Activated CD4-positive, alpha-beta memory T cell treated with anti-CD3 and anti-CD28 coated beads, Interleukin-2, amount 10 ng/mL, durations not matched to agents 7 days and 5 days (primary cell): ENCODE measurements at regions of chr4 and their contacts with region 1.

Region 1: DNA sequence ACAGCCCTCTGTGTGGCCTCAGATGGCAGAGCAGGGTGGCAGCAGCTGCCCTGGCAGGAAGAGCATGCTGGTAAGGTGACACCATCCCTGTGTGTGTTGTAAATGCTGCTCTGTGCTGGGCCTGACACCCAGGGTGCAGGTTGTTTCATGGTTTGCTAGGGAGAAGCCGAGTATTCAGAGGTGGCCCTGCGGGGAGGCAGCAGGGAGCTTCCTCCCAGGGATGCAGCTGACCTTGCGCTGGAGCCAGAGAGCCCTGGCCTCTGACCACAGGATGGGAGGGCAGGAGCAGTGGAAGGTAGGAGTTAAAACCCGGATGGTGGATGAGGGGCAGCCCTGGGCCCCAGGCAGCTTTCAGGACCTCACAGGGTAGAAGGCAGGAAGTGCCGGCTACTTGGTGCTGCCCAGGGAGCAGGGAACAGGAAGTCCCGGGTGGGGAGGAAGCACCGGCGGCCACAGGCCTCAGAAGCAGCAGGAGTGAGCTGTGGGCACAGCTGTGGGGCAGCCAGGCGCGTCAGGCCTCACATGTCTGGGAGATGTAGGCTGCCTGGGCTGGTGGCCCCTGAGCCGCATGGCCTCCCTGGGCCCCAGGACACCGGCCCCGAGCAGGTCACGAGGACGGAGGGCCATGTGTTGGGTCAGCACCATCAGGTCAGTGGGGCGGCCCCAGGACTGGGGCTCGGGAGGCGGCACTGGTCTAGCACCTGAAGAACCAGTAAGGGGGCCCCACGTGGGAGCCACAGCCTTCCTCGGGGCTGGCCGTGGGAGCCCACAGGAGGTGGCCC is 19.1 kb downstream of the SH3BP2 start:
- DNase-seq: peak; percentile 81
- H3K4me3 Mint-ChIP-seq: peak overlapping the region; percentile 82
- H3K27ac Mint-ChIP-seq: peak overlapping the region; percentile 99
- H3K4me1 Mint-ChIP-seq: peaks cover 62% of the 10 kb centered on the region
- H3K27me3 Mint-ChIP-seq: no peaks in the 10 kb centered on the region

Region 2: DNA sequence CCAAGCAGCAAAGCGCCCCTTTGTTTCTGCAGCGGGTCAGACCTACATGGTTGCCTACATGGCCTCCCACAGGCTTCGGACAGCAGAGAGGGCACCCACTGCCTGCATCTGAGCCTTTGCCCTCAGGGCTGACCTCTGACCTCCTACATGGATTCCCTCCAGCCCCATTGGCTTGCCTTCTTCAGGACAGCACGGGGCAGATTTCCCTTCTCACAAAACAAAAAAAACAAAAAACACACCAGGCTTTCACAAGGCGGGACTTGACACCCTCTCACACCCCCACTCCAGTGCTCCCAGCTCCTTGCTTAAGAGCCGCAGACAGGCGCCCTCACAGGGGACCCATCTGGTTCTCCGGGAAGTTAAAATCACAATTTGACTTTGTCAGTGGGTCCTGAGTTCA is 426.5 kb before region 1 on chr4:
- CTCF ChIA-PET with region 1: no interaction called
- POLR2A ChIA-PET with region 1: no interaction called
- DNase-seq: no peak
- H3K4me3 Mint-ChIP-seq: no peak overlapping the region
- H3K27ac Mint-ChIP-seq: no peak overlapping the region
- H3K4me1 Mint-ChIP-seq: peaks cover 11% of the 10 kb centered on the region
- H3K27me3 Mint-ChIP-seq: no peaks in the 10 kb centered on the region

Region 3: DNA sequence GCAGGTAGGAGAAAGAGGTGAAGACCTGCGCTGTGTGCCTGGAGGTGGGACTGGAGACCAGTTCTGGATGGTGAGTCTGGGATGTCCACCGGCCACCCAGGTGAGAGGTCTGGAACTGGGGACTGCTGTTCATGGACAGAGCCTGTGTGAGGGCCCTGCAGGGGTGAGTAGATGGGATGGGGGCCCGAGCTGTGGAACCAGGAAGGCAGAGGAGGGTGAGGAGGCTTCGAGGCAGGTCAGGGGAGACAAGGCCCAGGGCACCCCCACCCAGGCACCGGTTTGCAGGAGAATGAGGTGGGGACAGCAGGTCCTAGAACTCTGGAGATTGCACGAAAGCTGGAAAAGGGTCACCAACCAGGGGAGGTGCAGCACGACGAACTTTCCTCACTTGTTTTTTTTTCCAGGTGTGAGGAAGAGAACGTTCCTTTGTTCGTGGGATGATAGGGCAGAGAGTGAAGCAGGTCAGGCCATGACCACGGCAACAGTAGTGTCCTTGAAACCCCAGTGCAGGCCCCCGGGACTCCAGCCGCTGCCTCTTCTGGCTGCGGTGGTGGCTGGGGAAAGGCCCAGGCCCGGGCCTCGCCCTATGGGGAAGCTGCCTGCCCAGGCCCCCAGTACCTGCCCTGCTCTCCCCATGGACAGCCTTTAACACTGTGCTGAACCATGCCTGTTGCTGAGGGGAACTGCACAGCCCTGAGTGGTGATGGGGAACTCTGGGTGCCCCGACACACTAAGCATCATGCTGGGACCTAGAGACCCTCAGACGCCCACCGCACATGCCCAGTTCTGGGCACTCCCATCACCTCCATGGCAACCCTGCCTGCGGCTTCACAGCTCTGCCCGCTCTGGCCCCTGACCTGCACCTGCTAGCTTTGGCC is 78.8 kb before region 1 on chr4:
- CTCF ChIA-PET with region 1: no interaction called
- POLR2A ChIA-PET with region 1: no interaction called
- DNase-seq: no peak
- H3K4me3 Mint-ChIP-seq: no peak overlapping the region
- H3K27ac Mint-ChIP-seq: peak overlapping the region; percentile 35
- H3K4me1 Mint-ChIP-seq: peaks cover 12% of the 10 kb centered on the region
- H3K27me3 Mint-ChIP-seq: no peaks in the 10 kb centered on the region

Region 4: GRCh38 chr4:2800691-2801596 is 11.1 kb before region 1 on chr4:
- CTCF ChIA-PET with region 1: interaction called, 5 read pairs
- POLR2A ChIA-PET with region 1: interaction called, 86 read pairs
- DNase-seq: no peak
- H3K4me3 Mint-ChIP-seq: peak overlapping the region; percentile 65
- H3K27ac Mint-ChIP-seq: no peak overlapping the region
- H3K4me1 Mint-ChIP-seq: peaks cover 50% of the 10 kb centered on the region
- H3K27me3 Mint-ChIP-seq: no peaks in the 10 kb centered on the region

Region 5: DNA sequence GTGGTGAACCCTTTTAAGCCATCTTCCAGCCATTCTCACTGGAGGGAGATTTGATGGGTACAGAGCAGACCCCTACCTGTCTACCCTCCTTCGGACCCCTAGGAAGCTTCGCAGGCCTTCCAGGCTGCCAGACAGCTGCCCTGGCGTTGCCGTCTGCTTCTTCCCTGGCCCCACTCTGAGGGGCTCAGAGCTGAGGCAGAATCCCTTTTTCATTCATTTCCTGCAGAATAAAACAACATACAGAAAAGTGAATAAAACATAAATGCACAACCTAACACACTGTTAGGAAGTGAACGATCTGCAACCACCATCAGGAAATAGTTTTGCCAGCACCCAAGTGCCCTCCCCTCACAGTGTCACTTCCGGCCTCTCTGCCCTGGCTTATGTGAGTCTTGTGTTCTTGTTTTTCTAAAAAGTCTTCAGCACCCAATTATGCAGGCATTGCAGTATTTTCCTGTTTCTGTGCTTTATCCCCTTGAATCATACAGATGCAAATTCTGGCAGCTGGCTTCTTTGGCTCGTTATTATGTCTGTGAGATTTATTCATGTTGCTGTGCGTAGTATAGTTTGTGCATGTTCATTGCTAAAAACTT is 26.0 kb after region 1 on chr4:
- CTCF ChIA-PET with region 1: no interaction called
- POLR2A ChIA-PET with region 1: interaction called, 23 read pairs
- DNase-seq: peak; percentile 84
- H3K4me3 Mint-ChIP-seq: peak overlapping the region; percentile 75
- H3K27ac Mint-ChIP-seq: peak overlapping the region; percentile 93
- H3K4me1 Mint-ChIP-seq: peaks cover 75% of the 10 kb centered on the region
- H3K27me3 Mint-ChIP-seq: no peaks in the 10 kb centered on the region

Region 6: GRCh38 chr4:2843263-2843940 is 31.4 kb after region 1 on chr4 and contains the start of gene ADD1:
- CTCF ChIA-PET with region 1: no interaction called
- POLR2A ChIA-PET with region 1: interaction called, 23 read pairs
- DNase-seq: peak; percentile 94
- H3K4me3 Mint-ChIP-seq: peak within 1 kb of the TSS; percentile 84
- H3K27ac Mint-ChIP-seq: peak within 1 kb of the TSS; percentile 85
- H3K4me1 Mint-ChIP-seq: peaks cover 59% of the 10 kb centered on the region
- H3K27me3 Mint-ChIP-seq: no peaks in the 10 kb centered on the region
- total RNA-seq, gene ADD1: 266 to 277 TPM